GM12878 (cell line): ENCODE measurements at regions of chr15 and their contacts with region 1.

Region 1: GRCh38 chr15:54481819-54482218 is 503.6 kb downstream of the UNC13C start:
- DNase-seq: no peak
- ATAC-seq: peak; percentile 80
- H3K4me3 ChIP-seq: no peak overlapping the region
- H3K27ac ChIP-seq: no peak overlapping the region
- H3K4me1 ChIP-seq: no peaks in the 10 kb centered on the region
- H3K27me3 ChIP-seq: no peaks in the 10 kb centered on the region
- CTCF ChIP-seq: peak in 2 of 3 experiments; percentile 13 to 33; a peak in 2 of 6 replicates
- EP300 ChIP-seq: no peak
- POLR2A ChIP-seq: no peak
- RAD21 ChIP-seq: peak; percentile 35

Region 2: GRCh38 chr15:54264056-54264455 is 217.8 kb before region 1 on chr15:
- CTCF ChIA-PET with region 1: no interaction called
- POLR2A ChIA-PET with region 1: no interaction called
- RAD21 ChIA-PET with region 1: no interaction called
- SMC1A ChIA-PET with region 1: no interaction called
- in situ Hi-C with region 1: no loop called
- intact Hi-C with region 1: no loop called
- DNase-seq: no peak
- ATAC-seq: peak; percentile 32; the same call in 1 of the 3 replicates
- H3K4me3 ChIP-seq: no peak overlapping the region
- H3K27ac ChIP-seq: no peak overlapping the region
- H3K4me1 ChIP-seq: no peaks in the 10 kb centered on the region
- H3K27me3 ChIP-seq: no peaks in the 10 kb centered on the region
- CTCF ChIP-seq: no peak
- EP300 ChIP-seq: no peak
- POLR2A ChIP-seq: no peak
- RAD21 ChIP-seq: no peak

Region 3: GRCh38 chr15:54502416-54503075 is 20.7 kb after region 1 on chr15:
- CTCF ChIA-PET with region 1: interaction called, 4 read pairs
- POLR2A ChIA-PET with region 1: no interaction called
- RAD21 ChIA-PET with region 1: interaction called, 4 read pairs
- SMC1A ChIA-PET with region 1: interaction called, 17 read pairs
- in situ Hi-C with region 1: no loop called
- intact Hi-C with region 1: no loop called
- DNase-seq: no peak
- ATAC-seq: peak; percentile 44
- H3K4me3 ChIP-seq: no peak overlapping the region
- H3K27ac ChIP-seq: no peak overlapping the region
- H3K4me1 ChIP-seq: no peaks in the 10 kb centered on the region
- H3K27me3 ChIP-seq: no peaks in the 10 kb centered on the region
- CTCF ChIP-seq: no peak
- EP300 ChIP-seq: no peak
- POLR2A ChIP-seq: no peak
- RAD21 ChIP-seq: no peak